IMR-90 (cell line): ENCODE measurements at regions of chr2 and their contacts with region 1.

Region 1: DNA sequence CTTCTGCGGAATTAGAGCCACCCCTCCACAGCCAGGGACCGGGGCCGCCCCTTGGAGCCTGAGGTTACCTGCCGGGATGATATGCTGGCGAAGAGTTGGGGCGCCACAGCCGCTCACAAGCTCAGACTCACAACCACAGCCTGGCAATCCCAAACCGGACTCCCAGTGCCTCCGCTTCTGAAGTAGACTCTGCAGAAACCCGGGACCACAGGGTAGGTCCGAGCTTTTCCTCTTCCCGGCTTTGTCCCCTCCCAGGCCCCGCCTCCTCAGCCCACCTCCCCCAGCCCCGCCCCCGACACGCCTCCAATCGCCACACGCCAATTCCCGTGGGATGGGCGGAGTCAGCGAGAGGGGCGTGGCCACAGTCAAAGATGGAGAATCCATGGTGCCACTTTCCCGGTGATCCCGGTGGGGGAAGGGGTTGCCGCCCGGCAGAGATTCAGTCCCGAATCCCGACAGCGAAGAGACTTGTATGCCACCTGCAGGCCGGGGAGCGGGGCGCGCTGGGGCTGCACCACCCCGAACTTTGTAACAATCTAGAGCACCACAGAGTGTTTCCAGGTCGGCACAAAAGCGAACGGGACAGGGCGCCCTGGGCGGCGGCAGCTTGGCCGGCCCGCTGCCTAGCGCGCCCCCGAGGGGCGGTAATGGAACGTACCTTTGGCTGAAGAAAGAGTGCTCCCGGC is at the start of gene IDH1:
- DNase-seq: peak; percentile 89
- ATAC-seq: peak; percentile 93
- H3K4me3 ChIP-seq: peak within 1 kb of the TSS; percentile 75
- H3K27ac ChIP-seq: peak within 1 kb of the TSS; percentile 73
- H3K4me1 ChIP-seq: peaks cover 4% of the 10 kb centered on the region
- H3K27me3 ChIP-seq: no peaks in the 10 kb centered on the region
- CTCF ChIP-seq: peak; percentile 42
- POLR2A ChIP-seq: no peak
- RAD21 ChIP-seq: peak; percentile 31
- total RNA-seq, gene IDH1: 77.1 and 104 TPM in 2 replicates

Region 2: GRCh38 chr2:208101716-208102631 is 153.0 kb before region 1 on chr2:
- CTCF ChIA-PET with region 1: no interaction called
- POLR2A ChIA-PET with region 1: no interaction called
- dilution Hi-C with region 1: no loop called
- in situ Hi-C with region 1: no loop called
- intact Hi-C with region 1: loop called (anchors 1 kb)
- DNase-seq: peak; percentile 18
- ATAC-seq: peak; percentile 79
- H3K4me3 ChIP-seq: no peak overlapping the region
- H3K27ac ChIP-seq: no peak overlapping the region
- H3K4me1 ChIP-seq: no peaks in the 10 kb centered on the region
- H3K27me3 ChIP-seq: peaks cover 5% of the 10 kb centered on the region
- CTCF ChIP-seq: 0 out of 2 replicates have a peak, but pooled peaks have one; percentile 27
- POLR2A ChIP-seq: no peak
- RAD21 ChIP-seq: no peak; the same call in 1 of the 2 replicates

Region 3: DNA sequence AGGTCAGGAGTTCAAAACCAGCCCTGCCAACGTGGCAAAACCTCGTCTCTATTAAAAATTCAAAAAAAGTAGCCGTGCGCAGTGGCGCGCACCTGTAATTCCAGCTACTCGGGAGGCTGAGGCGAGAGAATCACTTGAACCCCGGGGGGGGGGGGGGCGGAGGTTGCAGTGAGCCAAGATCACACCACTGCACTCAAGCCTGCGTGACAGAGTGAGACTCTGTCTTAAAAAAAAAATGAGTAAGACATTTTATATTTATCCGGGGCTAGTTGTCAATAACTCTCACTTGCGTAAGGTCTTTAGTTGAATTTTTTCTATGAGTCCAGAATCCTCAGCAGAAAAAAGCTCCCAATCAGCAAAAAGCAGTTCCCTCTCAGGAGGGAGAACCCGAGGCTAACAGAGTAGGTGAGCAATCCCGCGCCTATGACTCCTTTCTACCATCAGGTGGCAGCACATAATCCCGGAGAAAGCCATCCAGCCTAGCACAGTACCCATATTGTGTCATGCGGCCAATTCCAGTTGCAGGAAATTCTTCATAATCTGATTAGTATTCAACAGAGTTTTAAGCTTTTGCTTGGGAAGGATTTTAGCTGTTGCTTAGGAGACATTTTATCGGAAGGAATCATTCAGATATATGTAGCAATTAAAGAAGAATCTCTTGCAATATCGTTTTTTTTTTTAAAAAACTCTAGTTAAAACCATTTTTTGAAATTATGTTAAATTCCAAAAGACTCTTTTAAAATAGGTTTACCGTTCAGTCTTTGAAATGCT is 79.8 kb before region 1 on chr2:
- CTCF ChIA-PET with region 1: interaction called, 11 read pairs
- POLR2A ChIA-PET with region 1: no interaction called
- dilution Hi-C with region 1: no loop called
- in situ Hi-C with region 1: no loop called
- intact Hi-C with region 1: loop called (anchors 1 kb)
- DNase-seq: peak; percentile 71
- ATAC-seq: peak; percentile 100
- H3K4me3 ChIP-seq: no peak overlapping the region
- H3K27ac ChIP-seq: no peak overlapping the region
- H3K4me1 ChIP-seq: no peaks in the 10 kb centered on the region
- H3K27me3 ChIP-seq: no peaks in the 10 kb centered on the region; the same call in 1 of the 2 replicates
- CTCF ChIP-seq: peak; percentile 81
- POLR2A ChIP-seq: no peak
- RAD21 ChIP-seq: peak; percentile 71

Region 4: GRCh38 chr2:208265801-208266552 is 11.0 kb after region 1 on chr2 and contains the start of gene PIKFYVE:
- CTCF ChIA-PET with region 1: interaction called, 5 read pairs
- POLR2A ChIA-PET with region 1: interaction called, 9 read pairs
- dilution Hi-C with region 1: no loop called
- in situ Hi-C with region 1: no loop called
- intact Hi-C with region 1: loop called (anchors 1 kb)
- DNase-seq: peak; percentile 98
- ATAC-seq: peak; percentile 98
- H3K4me3 ChIP-seq: peak within 1 kb of the TSS; percentile 98
- H3K27ac ChIP-seq: peak within 1 kb of the TSS; percentile 65
- H3K4me1 ChIP-seq: peaks cover 5% of the 10 kb centered on the region; the same call in 1 of the 2 replicates
- H3K27me3 ChIP-seq: no peaks in the 10 kb centered on the region
- CTCF ChIP-seq: no peak
- POLR2A ChIP-seq: peak; percentile 83
- RAD21 ChIP-seq: no peak
- total RNA-seq, gene PIKFYVE: 31.4 and 34.6 TPM in 2 replicates